Heart left ventricle (tissue), 16 donors: ENCODE measurements at regions of chr6 and their contacts with region 1.

Region 1: GRCh38 chr6:10521104-10521808 is at the start of gene GCNT2:
- DNase-seq: peak in 2 of 5 donors; percentile 15 to 43
- ATAC-seq: peak; percentile 58 to 81 (median 76)
- H3K4me3 ChIP-seq: peak within 1 kb of the TSS; percentile 2 to 53 (median 38)
- H3K27ac ChIP-seq: peak within 1 kb of the TSS; percentile 6 to 85 (median 76)
- H3K4me1 ChIP-seq: peaks cover 0 to 34% (median 7%) of the 10 kb centered on the region in 12 donors
- H3K27me3 ChIP-seq: no peaks in the 10 kb centered on the region
- CTCF ChIP-seq: no peak
- POLR2A ChIP-seq: no peak
- total RNA-seq, gene GCNT2: 29.2 to 68.8 (median 43.1) TPM

Region 2: DNA sequence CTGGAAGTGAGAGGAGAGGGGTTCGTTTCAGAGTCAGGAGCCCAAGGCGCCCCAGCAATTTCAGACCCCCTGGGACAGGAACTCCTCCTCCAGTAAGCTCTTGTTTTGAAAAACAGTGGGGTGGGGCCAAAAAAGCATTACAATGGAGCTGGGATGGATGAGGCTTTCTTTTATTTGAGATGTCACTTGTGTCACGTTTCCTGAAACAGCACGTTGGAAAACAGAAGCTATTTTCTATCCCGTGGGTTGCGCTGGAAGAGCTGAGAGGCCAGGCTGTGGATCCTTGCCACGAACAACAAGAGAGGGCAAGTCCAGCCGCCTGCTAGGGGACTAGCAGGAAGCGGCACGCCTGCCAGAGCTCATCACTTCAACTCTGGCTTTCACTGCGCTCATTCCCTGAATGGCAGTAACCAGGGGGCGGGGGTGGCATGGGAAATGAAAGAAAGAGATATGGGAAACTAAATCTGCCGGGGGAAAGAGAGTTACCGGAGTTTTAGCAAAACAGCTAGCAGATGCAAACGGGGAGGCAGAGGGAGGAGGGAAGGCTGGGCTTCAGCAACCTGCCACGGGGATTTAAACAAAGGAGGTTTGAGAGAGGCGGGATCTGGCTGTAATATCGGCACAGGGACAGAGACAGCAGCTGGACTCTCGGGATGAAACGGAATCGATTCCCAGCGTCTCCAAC is 34.5 kb after region 1 on chr6:
- intact Hi-C with region 1: loop called in 3 of 10 experiments (anchors 5 kb)
- DNase-seq: peak; percentile 59 to 85 (median 78)
- ATAC-seq: peak; percentile 75 to 92 (median 90)
- H3K4me3 ChIP-seq: peak overlapping the region in 11 of 12 donors; percentile 9 to 51 (median 43)
- H3K27ac ChIP-seq: peak overlapping the region in 11 of 12 donors; percentile 8 to 83 (median 75)
- H3K4me1 ChIP-seq: peaks cover 0 to 49% (median 21%) of the 10 kb centered on the region in 12 donors
- H3K27me3 ChIP-seq: peaks cover 0 to 6% (median 0%) of the 10 kb centered on the region in 9 donors
- CTCF ChIP-seq: no peak
- POLR2A ChIP-seq: no peak